ENCODE measurements at regions of chr20 and their contacts with region 1.

Region 1: GRCh38 chr20:37178839-37179670 is at the starts of genes MROH8 and RPN2:
- DNase-seq: peak; percentile 90 to 99
- H3K4me3 ChIP-seq: peak within 1 kb of the TSS; percentile 88
- H3K27ac ChIP-seq: peak within 1 kb of the TSS; percentile 87
- H3K4me1 ChIP-seq: peaks cover 15% of the 10 kb centered on the region
- H3K27me3 ChIP-seq: no peaks in the 10 kb centered on the region
- CTCF ChIP-seq: no peak
- total RNA-seq, gene MROH8: 3.3 TPM in 2 replicates
- total RNA-seq, gene RPN2: 164 and 185 TPM in 2 replicates

Region 2: DNA sequence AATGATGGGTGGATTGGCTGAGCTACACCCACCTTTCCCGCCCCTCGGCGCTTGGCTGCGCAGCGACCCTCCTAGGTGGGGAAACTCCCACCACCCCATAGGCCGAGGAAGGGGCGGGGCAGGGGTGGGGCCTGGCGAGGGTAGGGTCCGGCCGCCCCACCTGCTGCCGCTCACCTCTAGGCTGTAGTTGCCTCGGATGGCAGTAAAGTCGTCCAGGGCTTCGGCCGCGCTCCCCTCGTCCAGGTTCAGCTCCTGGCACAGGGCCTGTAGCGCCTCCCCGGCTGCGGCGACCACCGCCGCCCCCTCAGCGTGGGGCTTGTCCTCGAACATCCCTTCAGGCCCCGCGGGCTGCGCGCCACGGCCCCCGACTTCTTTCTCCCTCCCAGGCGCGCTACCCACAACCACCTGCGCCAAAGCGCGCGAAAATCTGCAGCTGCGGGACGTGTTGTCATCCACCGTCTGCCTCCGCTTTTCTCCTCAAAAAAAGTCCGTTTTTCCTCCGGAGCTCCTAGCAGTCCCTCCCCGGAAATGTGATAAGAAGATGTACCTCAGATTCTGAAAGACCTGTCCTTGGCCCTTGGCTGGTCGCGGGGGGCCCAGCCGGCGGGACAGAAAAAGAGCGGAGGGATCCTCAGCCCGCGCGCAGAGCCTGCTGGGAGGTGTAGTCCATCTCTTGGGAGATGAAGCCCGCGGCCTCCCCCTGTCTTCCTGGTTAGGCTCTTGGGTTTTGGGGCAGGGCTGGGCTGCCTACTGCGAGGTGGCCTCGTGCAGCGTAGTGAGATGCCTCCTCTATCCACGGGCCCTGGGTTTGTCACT is 83.2 kb before region 1 on chr20 and contains the start of gene RBL1:
- CTCF ChIA-PET with region 1: interaction called, 7 read pairs
- POLR2A ChIA-PET with region 1: interaction called, 4 read pairs
- intact Hi-C with region 1: loop called (anchors 1 kb)
- DNase-seq: peak; percentile 60 to 81
- H3K4me3 ChIP-seq: peak within 1 kb of the TSS; percentile 99
- H3K27ac ChIP-seq: no peak within 1 kb of the TSS
- H3K4me1 ChIP-seq: peaks cover 14% of the 10 kb centered on the region
- H3K27me3 ChIP-seq: no peaks in the 10 kb centered on the region
- CTCF ChIP-seq: no peak; the same call in 1 of the 2 replicates
- total RNA-seq, gene RBL1: 14.6 and 23.0 TPM in 2 replicates

Region 3: GRCh38 chr20:37358366-37359150 is 179.5 kb after region 1 on chr20:
- CTCF ChIA-PET with region 1: no interaction called
- POLR2A ChIA-PET with region 1: interaction called, 20 read pairs
- intact Hi-C with region 1: no loop called
- DNase-seq: no peak
- H3K4me3 ChIP-seq: no peak overlapping the region
- H3K27ac ChIP-seq: no peak overlapping the region
- H3K4me1 ChIP-seq: no peaks in the 10 kb centered on the region
- H3K27me3 ChIP-seq: no peaks in the 10 kb centered on the region
- CTCF ChIP-seq: no peak

Region 4: DNA sequence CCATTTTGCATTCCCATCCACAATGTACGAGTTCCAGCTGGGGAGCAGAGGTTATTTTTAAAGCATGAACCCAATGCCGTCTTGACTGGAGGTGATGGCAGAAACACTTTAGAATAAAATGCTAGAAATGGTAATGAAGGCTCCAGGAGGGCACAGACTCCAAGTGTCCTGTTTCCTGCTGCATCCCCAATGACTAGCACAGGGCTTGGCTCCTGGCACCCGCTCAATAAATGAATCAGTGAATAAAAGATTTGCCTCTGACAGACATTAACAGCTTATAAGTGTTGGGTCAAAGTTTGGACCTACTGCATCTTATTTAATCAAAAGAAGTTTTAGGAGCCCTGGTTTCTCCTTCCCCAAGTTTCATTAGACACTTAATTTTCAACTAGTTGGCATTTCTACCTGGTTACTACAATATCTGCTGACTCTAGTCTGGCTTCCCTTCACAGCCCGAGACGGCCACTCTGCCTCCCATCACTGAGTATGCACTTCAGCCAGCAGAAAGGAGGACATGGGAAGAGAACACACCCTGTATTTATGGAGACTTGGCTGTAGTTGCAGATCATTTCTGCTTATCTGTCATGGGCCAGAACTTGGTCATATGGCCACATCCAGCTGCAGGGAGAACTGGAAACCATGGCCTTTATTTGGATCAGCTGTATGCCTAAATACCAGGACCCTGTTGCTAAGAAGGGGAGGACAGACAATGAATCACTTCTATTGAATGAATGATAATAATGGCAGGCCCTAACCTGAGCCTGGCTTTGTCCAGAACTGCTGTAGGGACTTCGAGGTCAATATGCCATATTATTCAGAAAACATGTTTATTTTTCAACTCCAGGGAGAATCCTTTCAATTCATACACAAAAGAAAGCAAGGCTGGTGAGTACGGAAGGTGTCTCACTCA is 791.1 kb after region 1 on chr20:
- CTCF ChIA-PET with region 1: interaction called, 10 read pairs
- POLR2A ChIA-PET with region 1: no interaction called
- intact Hi-C with region 1: no loop called
- DNase-seq: no peak
- H3K4me3 ChIP-seq: no peak overlapping the region
- H3K27ac ChIP-seq: no peak overlapping the region
- H3K4me1 ChIP-seq: no peaks in the 10 kb centered on the region
- H3K27me3 ChIP-seq: peaks cover 20% of the 10 kb centered on the region
- CTCF ChIP-seq: no peak

Measured in PC-9 (cell line).